ENCODE measurements at regions of chr17 and their contacts with region 1.

Region 1: GRCh38 chr17:43940630-43941029 is 1.6 kb downstream of the PPY start:
- DNase-seq: no peak
- ATAC-seq: no peak
- H3K4me3 Mint-ChIP-seq: no peak overlapping the region
- H3K27ac Mint-ChIP-seq: no peak overlapping the region
- H3K4me1 Mint-ChIP-seq: peaks cover 12% of the 10 kb centered on the region
- H3K27me3 Mint-ChIP-seq: peaks cover 29% of the 10 kb centered on the region

Region 2: DNA sequence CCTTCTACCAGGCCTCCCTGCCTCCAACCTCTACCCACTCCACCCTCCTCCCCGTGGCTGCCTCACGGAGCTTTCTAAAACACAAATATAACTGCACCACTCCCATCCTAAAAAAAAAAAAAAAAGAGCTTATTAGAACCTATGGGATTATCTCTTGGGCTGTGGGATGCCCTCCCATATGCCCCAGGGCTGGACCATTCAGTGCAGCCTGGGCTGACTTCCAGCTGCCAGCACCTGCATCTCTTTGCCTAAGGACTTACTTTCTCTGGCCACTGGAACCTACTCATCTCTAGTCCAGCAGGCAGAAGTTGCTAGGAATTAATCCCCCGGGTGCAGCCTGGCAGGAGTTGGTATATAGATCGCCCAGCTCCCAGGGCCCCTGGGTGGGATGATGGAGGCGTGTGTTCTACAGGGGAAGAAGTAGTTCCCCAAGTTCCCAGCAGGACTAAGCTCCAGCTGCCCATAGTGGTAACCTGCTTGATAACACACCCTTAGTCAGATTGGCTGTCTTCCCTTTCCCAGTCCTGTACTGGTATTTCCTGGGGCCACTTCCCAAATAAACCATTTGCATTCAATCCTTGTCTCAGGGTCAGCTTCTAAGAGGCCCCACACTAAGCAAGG is 118.0 kb before region 1 on chr17:
- CTCF ChIA-PET with region 1: no interaction called
- DNase-seq: no peak
- ATAC-seq: no peak
- H3K4me3 Mint-ChIP-seq: no peak overlapping the region
- H3K27ac Mint-ChIP-seq: no peak overlapping the region
- H3K4me1 Mint-ChIP-seq: no peaks in the 10 kb centered on the region
- H3K27me3 Mint-ChIP-seq: no peaks in the 10 kb centered on the region

Region 3: DNA sequence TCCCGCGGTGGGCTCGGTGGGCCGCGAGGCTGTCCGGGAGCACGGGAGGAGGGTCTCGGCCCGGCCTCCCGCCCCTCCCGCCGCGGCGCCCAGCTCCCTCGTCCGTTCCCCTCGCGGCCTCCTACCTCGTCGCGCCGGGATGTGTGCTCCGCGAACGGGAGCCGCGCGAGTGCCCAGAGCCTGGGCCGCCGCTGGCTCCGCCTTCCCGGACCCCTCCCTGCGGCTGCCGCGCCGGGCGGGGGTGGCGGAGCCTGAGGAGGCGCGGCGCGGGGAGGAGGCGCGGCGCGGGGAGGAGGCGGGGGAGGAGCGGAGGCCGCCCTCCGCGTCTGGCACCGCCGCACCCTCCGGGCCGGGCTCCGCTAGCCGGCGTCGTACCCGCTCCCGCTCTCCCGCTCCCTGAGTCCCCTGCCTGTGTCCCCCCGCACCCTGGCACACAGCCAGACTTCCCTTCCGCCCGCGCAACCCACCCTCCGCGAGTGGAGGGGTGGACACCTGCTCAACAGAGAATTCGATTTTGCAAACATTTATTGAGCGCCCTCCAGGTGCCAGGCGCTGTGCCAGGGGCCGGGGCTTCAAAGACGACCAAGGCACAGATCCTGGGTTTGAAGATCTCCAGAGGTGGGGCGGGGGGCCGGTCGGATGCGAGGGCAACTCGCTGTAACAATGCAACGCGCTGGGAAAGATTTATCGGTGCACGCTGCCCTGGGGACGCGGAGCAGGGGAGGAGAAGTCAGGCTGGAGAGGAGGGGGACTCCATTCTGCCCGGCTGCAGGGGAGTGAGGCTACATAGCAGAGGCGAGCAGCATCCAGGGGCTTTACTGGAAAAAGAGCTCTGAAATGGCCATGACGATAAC is 107.4 kb before region 1 on chr17 and contains the start of gene MPP3:
- CTCF ChIA-PET with region 1: no interaction called
- DNase-seq: no peak
- ATAC-seq: peak; percentile 78
- H3K4me3 Mint-ChIP-seq: peak within 1 kb of the TSS; percentile 49
- H3K27ac Mint-ChIP-seq: no peak within 1 kb of the TSS
- H3K4me1 Mint-ChIP-seq: peaks cover 13% of the 10 kb centered on the region
- H3K27me3 Mint-ChIP-seq: peaks cover 63% of the 10 kb centered on the region
- total RNA-seq, gene MPP3: not detected

Region 4: GRCh38 chr17:43927060-43927864 is 13.4 kb before region 1 on chr17:
- CTCF ChIA-PET with region 1: interaction called, 18 read pairs
- DNase-seq: no peak
- ATAC-seq: no peak
- H3K4me3 Mint-ChIP-seq: peak overlapping the region; percentile 50
- H3K27ac Mint-ChIP-seq: no peak overlapping the region
- H3K4me1 Mint-ChIP-seq: peaks cover 27% of the 10 kb centered on the region
- H3K27me3 Mint-ChIP-seq: peaks cover 21% of the 10 kb centered on the region

Region 5: DNA sequence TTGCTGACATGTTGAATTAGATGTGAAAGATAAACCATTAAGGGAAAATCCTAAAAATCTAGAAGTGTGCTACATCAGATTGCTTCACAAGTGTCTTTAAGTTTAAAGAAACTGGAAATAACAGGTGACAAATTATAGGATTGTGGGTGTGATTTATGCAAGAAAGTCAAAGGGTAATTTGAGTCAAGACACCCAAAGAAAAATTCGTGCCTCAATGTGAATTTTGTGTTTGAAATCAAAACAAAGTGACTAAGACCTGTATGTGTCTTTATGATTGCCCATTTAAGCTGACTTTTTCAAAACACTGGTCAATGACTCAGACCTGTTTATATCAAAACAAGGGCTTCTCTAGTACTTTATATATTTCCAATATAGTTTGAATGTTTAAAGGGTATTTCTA is 18.3 kb after region 1 on chr17:
- CTCF ChIA-PET with region 1: interaction called, 16 read pairs
- DNase-seq: no peak
- ATAC-seq: no peak
- H3K4me3 Mint-ChIP-seq: no peak overlapping the region
- H3K27ac Mint-ChIP-seq: no peak overlapping the region
- H3K4me1 Mint-ChIP-seq: no peaks in the 10 kb centered on the region
- H3K27me3 Mint-ChIP-seq: peaks cover 43% of the 10 kb centered on the region

Region 6: DNA sequence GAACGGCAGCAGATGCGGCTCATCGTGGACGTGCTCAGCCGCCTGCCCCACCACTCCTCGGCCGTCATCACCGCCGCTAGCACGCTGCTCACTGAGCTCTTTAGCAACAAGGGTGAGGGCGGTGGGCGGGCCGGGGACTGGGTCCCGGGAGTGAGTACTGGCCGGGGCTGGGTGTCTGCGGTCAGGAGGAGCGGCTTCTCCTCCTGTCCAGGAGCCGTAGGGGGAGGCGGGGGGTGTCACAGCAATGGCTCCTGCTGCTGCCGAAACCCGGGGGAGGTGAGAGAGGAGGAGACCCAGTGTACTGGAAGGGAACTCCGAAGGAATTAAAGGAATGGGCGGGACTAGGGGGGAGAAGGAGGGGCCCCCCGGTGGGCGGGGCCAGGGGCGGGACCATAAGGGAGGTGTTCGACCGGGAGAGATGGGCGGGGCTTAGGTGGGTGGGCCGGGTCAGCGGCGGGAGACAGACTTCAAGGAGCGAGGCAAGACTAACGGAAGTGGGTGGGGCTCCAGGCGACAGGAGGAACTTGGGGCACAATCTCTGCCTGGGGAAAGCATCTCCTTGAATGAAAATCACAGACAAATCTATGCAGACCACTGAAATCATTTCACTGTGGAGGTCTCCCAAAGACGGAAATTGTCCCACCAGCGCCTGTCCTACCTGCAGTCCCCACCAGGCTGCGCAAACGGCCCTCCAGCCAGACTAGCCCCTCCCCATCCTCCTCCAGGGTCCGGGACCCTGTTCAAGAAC is 66.1 kb after region 1 on chr17:
- CTCF ChIA-PET with region 1: interaction called, 14 read pairs
- DNase-seq: peak; percentile 99
- ATAC-seq: peak; percentile 89
- H3K4me3 Mint-ChIP-seq: peak overlapping the region; percentile 79
- H3K27ac Mint-ChIP-seq: peak overlapping the region; percentile 7
- H3K4me1 Mint-ChIP-seq: peaks cover 26% of the 10 kb centered on the region
- H3K27me3 Mint-ChIP-seq: peaks cover 22% of the 10 kb centered on the region

Region 7: GRCh38 chr17:44110823-44111633 is 170.4 kb after region 1 on chr17:
- CTCF ChIA-PET with region 1: interaction called, 13 read pairs
- DNase-seq: peak; percentile 78
- ATAC-seq: peak; percentile 78
- H3K4me3 Mint-ChIP-seq: peak overlapping the region; percentile 40
- H3K27ac Mint-ChIP-seq: no peak overlapping the region
- H3K4me1 Mint-ChIP-seq: peaks cover 16% of the 10 kb centered on the region
- H3K27me3 Mint-ChIP-seq: no peaks in the 10 kb centered on the region

Measured in activated CD8-positive, alpha-beta memory T cell treated with anti-CD3 and anti-CD28 coated beads, Interleukin-2, amount 10 ng/mL, durations not matched to agents 7 days and 5 days (primary cell).